Caco-2 (cell line): ENCODE measurements at regions of chr3 and their contacts with region 1.

Region 1: GRCh38 chr3:72818092-72818773 is 30.0 kb downstream of the SHQ1 start:
- DNase-seq: peak in 1 of 2 experiments; percentile 16
- H3K4me3 ChIP-seq: no peak overlapping the region
- H3K4me3 Mint-ChIP-seq: no peak overlapping the region
- H3K27ac Mint-ChIP-seq: no peak overlapping the region
- H3K4me1 ChIP-seq: peaks cover 27% of the 10 kb centered on the region
- H3K4me1 Mint-ChIP-seq: peaks cover 8% of the 10 kb centered on the region
- H3K27me3 ChIP-seq: no peaks in the 10 kb centered on the region
- H3K27me3 Mint-ChIP-seq: no peaks in the 10 kb centered on the region
- CTCF ChIP-seq: peak; percentile 46 to 61

Region 2: DNA sequence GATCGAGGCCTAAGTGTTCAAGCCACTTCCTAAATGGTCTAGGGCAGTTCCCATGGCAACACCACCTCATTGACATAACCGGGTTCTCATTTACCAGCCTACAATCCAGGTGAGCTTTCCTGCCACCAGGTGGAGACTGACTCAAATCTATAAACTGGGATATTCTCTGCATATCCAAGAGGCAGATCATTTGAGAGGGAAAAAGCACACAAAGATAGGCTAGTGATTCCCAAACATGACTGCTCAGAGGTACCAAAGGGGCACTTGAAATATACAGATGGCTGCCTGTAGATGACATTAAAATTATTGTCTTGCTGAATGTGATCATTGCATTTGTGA is 892.0 kb before region 1 on chr3:
- CTCF ChIA-PET with region 1: no interaction called
- POLR2A ChIA-PET with region 1: no interaction called
- intact Hi-C with region 1: loop called (anchors 1 kb)
- DNase-seq: peak; percentile 67 to 71
- H3K4me3 ChIP-seq: no peak overlapping the region
- H3K4me3 Mint-ChIP-seq: no peak overlapping the region
- H3K27ac Mint-ChIP-seq: no peak overlapping the region
- H3K4me1 ChIP-seq: peaks cover 8% of the 10 kb centered on the region; the same call in 1 of the 2 replicates
- H3K4me1 Mint-ChIP-seq: peaks cover 9% of the 10 kb centered on the region
- H3K27me3 ChIP-seq: no peaks in the 10 kb centered on the region
- H3K27me3 Mint-ChIP-seq: peaks cover 8% of the 10 kb centered on the region
- CTCF ChIP-seq: peak; percentile 66 to 76

Region 3: GRCh38 chr3:72270072-72270681 is 548.1 kb before region 1 on chr3:
- CTCF ChIA-PET with region 1: no interaction called
- POLR2A ChIA-PET with region 1: no interaction called
- intact Hi-C with region 1: loop called (anchors 10 kb)
- DNase-seq: peak; percentile 62 to 66
- H3K4me3 ChIP-seq: no peak overlapping the region
- H3K4me3 Mint-ChIP-seq: no peak overlapping the region
- H3K27ac Mint-ChIP-seq: peak overlapping the region; percentile 69
- H3K4me1 ChIP-seq: peaks cover 14% of the 10 kb centered on the region
- H3K4me1 Mint-ChIP-seq: peaks cover 19% of the 10 kb centered on the region
- H3K27me3 ChIP-seq: no peaks in the 10 kb centered on the region
- H3K27me3 Mint-ChIP-seq: no peaks in the 10 kb centered on the region
- CTCF ChIP-seq: no peak

Region 4: DNA sequence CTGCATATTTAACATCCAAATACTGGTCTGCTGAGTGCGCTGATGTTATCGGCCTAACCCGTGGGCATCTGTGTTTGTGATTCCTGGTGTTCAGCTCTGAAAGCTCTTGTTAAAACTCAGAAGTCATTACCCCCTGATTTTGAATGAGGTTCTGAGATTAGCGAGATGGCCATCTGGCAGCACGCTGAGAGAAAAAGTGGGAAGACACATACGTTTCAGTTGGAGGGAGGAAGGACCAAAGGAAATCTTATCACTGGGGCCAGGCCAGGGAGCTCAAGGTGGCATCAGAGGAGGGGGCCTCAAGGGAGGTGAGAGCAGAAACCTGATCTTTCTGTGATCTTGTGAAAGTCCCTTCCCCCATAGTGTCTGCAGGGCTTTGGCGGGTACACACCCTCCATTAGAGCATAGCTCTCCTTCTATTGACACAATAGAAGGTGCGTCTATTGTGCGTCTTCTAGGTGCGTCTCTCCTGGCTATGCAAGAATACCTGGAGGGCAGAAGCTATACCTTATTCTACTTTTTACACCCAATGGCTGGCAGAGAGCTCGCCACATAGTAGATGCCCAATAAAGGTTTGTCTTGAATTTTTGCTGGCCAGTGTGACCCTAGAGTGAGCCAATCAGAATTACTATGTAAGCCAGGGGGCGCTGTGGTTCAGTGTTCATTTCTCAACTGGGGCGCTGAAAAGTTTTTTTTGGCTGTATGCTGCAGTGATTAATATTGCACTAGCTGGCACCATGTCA is 152.4 kb before region 1 on chr3:
- CTCF ChIA-PET with region 1: interaction called, 22 read pairs
- POLR2A ChIA-PET with region 1: no interaction called
- intact Hi-C with region 1: loop called (anchors 1 kb)
- DNase-seq: peak in 1 of 2 experiments; percentile 67
- H3K4me3 ChIP-seq: no peak overlapping the region
- H3K4me3 Mint-ChIP-seq: no peak overlapping the region
- H3K27ac Mint-ChIP-seq: no peak overlapping the region
- H3K4me1 ChIP-seq: no peaks in the 10 kb centered on the region
- H3K4me1 Mint-ChIP-seq: no peaks in the 10 kb centered on the region
- H3K27me3 ChIP-seq: no peaks in the 10 kb centered on the region
- H3K27me3 Mint-ChIP-seq: no peaks in the 10 kb centered on the region
- CTCF ChIP-seq: peak; percentile 49 to 57